Heart left ventricle (tissue), 16 donors: ENCODE measurements at regions of chr10 and their contacts with region 1.

Region 1: DNA sequence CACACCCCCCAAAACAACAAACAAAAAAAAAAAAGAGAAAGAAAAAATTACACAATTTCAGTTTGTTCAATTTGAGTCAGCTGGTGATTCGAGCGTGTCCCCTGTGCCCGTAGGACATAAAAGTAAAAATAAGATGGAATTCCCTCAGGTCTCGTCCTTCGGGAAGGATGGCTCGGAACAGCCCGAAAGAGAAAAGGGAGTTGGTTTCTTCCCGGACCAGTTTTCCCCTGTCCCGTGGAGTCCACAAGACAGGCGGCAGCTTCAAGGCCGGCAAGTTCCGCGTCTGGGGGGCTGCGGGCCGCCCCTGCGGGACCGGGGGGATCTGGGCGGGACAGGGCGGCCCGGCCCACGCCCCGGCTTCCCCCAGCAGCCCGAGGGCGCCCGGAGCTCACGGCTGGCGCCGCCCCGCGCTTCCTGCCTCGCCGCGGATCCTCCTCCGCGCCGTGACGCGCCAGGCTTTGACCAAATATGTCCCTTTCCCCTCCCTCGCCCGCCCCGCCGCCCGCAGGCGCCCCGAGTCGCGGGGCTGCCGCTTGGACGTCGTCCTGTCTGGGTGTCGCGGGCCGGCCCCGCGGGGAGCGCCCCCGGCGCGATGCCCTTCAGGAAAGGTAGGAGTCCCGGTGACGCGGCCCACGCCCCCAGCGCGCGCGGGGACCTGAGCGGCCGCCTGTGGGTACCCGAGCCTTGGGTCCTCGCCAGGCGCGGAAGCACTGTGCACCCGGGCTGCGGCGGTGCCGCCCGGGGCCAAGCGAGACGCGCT is 55.8 kb downstream of the RBM17 start:
- DNase-seq: peak; percentile 92 to 96 (median 94)
- ATAC-seq: peak; percentile 68 to 97 (median 94)
- H3K4me3 ChIP-seq: peak overlapping the region; percentile 54 to 97 (median 88)
- H3K27ac ChIP-seq: peak overlapping the region in 11 of 12 donors; percentile 77 to 94 (median 89)
- H3K4me1 ChIP-seq: peaks cover 0 to 67% (median 12%) of the 10 kb centered on the region in 12 donors
- H3K27me3 ChIP-seq: no peaks in the 10 kb centered on the region
- CTCF ChIP-seq: peak in 3 of 12 donors; percentile 11 to 40 (median 35)
- POLR2A ChIP-seq: peak in 1 of 2 donors; percentile 91

Region 2: GRCh38 chr10:6108603-6109443 is 35.8 kb before region 1 on chr10:
- intact Hi-C with region 1: loop called in 5 of 10 experiments (anchors 2 to 5 kb)
- DNase-seq: no peak
- ATAC-seq: peak in 2 of 4 donors; percentile 29 to 45
- H3K4me3 ChIP-seq: no peak overlapping the region
- H3K27ac ChIP-seq: no peak overlapping the region
- H3K4me1 ChIP-seq: peaks cover 0 to 24% (median 0%) of the 10 kb centered on the region in 12 donors
- H3K27me3 ChIP-seq: no peaks in the 10 kb centered on the region
- CTCF ChIP-seq: peak; percentile 58 to 81 (median 74)
- POLR2A ChIP-seq: no peak

Region 3: GRCh38 chr10:6114805-6115341 is 29.7 kb before region 1 on chr10:
- intact Hi-C with region 1: loop called in 3 of 10 experiments (anchors 5 kb)
- DNase-seq: peak in 1 of 5 donors; percentile 48
- ATAC-seq: peak; percentile 40 to 62 (median 50)
- H3K4me3 ChIP-seq: no peak overlapping the region
- H3K27ac ChIP-seq: peak overlapping the region in 11 of 12 donors; percentile 17 to 71 (median 57)
- H3K4me1 ChIP-seq: peaks cover 0 to 42% (median 13%) of the 10 kb centered on the region in 12 donors
- H3K27me3 ChIP-seq: no peaks in the 10 kb centered on the region
- CTCF ChIP-seq: peak in 1 of 12 donors; percentile 5
- POLR2A ChIP-seq: no peak

Region 4: DNA sequence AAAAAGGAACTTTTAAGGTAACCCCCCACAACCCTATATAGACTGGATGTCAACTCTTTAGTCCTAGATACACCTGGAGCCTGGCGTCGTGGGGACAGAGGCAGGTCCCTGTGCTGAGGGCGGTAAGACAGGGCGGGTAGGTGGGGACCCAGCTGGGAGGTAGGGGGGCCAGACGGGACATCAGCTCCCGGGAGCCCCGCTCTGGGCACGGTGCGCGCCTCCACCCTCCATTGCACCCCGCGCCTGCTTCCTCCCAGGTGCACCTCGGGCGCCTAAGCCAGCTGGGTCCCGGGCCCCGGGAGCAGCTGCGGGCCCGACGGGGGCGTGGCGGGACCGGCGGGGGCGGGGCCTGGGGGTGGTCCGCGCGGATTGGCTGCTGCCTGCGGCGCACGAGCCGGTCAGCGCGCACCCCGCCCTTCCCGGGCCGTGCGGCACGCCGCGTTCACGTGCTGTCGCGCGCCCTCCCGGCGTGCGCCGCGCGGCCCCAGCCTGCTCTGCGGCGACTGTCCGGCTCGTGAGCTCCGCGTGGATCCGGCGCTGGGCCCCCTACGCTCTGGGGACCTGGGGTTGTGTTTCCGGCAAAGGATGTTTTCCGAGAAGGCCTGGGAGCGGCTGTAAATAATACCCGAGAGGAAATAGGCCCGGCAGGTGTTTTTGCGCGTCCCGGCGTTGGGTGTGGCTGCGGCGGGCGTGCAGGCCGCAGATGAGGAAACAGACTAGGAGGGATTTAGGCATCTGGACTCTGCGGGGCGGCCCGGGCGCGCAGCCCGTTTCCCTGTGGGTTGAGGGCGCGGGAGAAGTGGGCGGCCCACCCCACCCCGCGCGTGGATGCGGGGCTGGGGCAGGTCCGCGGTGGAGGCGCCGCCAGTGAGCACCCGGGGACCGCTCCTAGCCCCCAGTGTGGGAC is 19.0 kb after region 1 on chr10:
- intact Hi-C with region 1: loop called in 2 of 10 experiments (anchors 2 kb)
- DNase-seq: peak; percentile 92 to 95 (median 94)
- ATAC-seq: peak; percentile 97 to 100 (median 98)
- H3K4me3 ChIP-seq: peak overlapping the region; percentile 55 to 93 (median 78)
- H3K27ac ChIP-seq: peak overlapping the region; percentile 83 to 99 (median 94)
- H3K4me1 ChIP-seq: peaks cover 4 to 44% (median 24%) of the 10 kb centered on the region in 12 donors
- H3K27me3 ChIP-seq: no peaks in the 10 kb centered on the region
- CTCF ChIP-seq: no peak
- POLR2A ChIP-seq: peak in 1 of 2 donors; percentile 58

Region 5: DNA sequence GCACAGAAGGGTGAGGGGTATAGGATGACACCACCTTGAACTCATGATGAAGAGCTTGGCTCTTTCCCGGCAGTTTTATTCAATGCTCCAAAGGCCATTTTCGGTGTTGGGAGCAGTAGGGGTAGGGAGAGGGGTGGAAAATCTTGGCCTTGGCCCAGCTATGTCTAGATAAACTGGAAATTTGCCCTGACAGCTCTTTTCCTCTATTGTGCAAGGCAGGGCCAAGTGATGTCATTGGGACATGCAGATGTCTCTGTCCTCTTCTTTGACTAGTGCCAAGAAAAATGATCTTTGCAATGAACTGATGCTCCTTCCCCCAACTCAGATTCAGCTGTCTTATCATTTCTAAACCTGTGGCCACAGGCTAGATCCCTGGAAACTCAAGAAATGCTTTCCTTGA is 463.2 kb after region 1 on chr10:
- intact Hi-C with region 1: no loop called
- DNase-seq: peak in 3 of 5 donors; percentile 9 to 61 (median 21)
- ATAC-seq: peak in 2 of 4 donors; percentile 10 to 39
- H3K4me3 ChIP-seq: no peak overlapping the region
- H3K27ac ChIP-seq: no peak overlapping the region
- H3K4me1 ChIP-seq: peaks cover 0 to 13% (median 0%) of the 10 kb centered on the region in 12 donors
- H3K27me3 ChIP-seq: peaks cover 0 to 21% (median 2%) of the 10 kb centered on the region in 9 donors
- CTCF ChIP-seq: no peak
- POLR2A ChIP-seq: no peak

Region 6: DNA sequence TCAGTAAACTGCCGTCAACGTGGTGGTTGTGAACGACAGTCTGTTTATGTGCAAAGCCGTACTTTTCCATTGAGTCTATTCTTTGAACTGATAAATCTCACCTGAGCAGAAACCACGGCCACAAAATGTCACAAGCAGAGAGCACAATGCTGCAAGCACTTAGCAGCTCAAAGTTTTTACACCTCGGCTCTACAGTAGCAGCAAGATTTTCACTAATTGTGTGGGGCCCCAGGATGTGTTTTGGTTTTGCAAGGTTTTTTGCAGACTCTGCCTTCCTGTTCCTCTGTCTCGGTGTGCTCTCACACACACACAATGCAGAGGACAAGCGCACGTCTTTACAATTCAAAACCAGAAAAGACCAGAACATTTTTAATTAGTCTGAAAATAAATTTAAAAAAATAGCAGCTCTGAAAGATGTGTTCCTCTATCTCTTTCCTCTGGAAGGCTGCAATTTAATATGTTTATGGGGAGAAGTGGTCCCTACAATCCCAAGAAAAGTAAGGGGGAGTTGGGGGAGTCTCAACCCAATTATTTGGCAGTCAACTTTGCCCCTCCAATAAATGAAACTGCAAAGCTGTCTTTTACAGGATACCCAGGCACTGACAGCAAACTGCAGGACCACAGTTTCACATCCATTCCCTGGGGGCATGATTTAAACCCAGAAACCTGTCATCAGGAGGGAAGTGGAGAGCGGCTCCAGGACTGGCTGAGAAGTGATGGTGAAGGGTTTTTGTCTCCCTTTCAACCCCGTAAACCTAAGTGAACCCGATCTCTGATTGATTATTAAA is 1340.1 kb after region 1 on chr10:
- intact Hi-C with region 1: no loop called
- DNase-seq: no peak
- ATAC-seq: peak in 2 of 4 donors; percentile 27 to 51
- H3K4me3 ChIP-seq: peak overlapping the region in 5 of 12 donors; percentile 16 to 35 (median 21)
- H3K27ac ChIP-seq: peak overlapping the region in 6 of 12 donors; percentile 3 to 91 (median 28)
- H3K4me1 ChIP-seq: peaks cover 0 to 91% (median 12%) of the 10 kb centered on the region in 12 donors
- H3K27me3 ChIP-seq: peaks cover 0 to 14% (median 0%) of the 10 kb centered on the region in 9 donors
- CTCF ChIP-seq: no peak
- POLR2A ChIP-seq: no peak